Activated CD4-positive, alpha-beta T cell treated with anti-CD3 and anti-CD28 coated beads for 36 hours (primary cell): ENCODE measurements at regions of chr9 and their contacts with region 1.

Region 1: GRCh38 chr9:93453047-93453914 is at the start of gene FAM120AOS:
- DNase-seq: peak; percentile 92
- ATAC-seq: peak; percentile 68
- H3K4me3 Mint-ChIP-seq: peak within 1 kb of the TSS; percentile 89
- H3K27ac Mint-ChIP-seq: peak within 1 kb of the TSS; percentile 96
- H3K4me1 Mint-ChIP-seq: peaks cover 47% of the 10 kb centered on the region
- H3K27me3 Mint-ChIP-seq: no peaks in the 10 kb centered on the region
- total RNA-seq, gene FAM120AOS: 38.7 to 43.1 TPM

Region 2: DNA sequence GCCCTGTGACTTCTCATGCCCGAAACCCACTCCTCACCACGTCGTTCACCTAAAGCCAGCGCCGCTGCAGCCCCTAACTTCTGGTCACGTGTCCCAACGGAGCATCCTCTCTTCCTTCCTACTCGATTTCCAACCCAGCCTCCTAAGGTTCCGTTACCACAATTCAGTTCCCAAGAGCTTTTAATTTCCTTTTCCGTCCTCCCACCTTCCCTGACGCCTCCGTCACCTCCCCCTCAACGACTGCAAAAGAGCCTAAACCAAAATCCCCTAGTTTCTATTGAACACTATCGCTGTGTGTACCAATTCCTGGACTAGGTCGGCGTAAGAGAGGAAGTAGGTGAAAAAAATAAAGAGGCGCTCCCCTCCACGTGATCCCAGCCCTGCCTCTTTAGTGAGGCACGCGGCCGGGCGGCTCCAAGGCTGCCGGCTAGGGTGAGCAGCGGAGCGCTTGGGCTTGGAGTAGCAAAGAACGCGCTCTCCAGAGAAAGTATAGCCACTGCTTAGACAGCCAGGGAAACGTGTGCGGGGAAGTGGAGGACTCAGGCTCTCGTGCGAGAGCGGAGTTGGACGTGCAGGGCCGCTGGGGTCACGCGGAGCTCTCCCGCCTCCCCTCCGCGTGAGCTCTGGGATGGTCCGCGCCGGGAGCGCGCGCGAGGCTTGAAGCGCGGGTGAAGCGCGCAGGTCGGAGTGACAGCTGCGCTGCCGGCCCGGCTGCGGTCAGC is 1127.9 kb before region 1 on chr9 and contains the starts of genes CENPP and NOL8:
- CTCF ChIA-PET with region 1: no interaction called
- POLR2A ChIA-PET with region 1: no interaction called
- intact Hi-C with region 1: loop called in 1 of 2 experiments (anchors 5 kb)
- DNase-seq: peak; percentile 90
- ATAC-seq: peak; percentile 95
- H3K4me3 Mint-ChIP-seq: peak within 1 kb of the TSS; percentile 89
- H3K27ac Mint-ChIP-seq: peak within 1 kb of the TSS; percentile 97
- H3K4me1 Mint-ChIP-seq: peaks cover 37% of the 10 kb centered on the region
- H3K27me3 Mint-ChIP-seq: no peaks in the 10 kb centered on the region
- total RNA-seq, gene CENPP: 22.8 to 32.3 TPM
- total RNA-seq, gene NOL8: 57.7 to 80.2 TPM

Region 3: DNA sequence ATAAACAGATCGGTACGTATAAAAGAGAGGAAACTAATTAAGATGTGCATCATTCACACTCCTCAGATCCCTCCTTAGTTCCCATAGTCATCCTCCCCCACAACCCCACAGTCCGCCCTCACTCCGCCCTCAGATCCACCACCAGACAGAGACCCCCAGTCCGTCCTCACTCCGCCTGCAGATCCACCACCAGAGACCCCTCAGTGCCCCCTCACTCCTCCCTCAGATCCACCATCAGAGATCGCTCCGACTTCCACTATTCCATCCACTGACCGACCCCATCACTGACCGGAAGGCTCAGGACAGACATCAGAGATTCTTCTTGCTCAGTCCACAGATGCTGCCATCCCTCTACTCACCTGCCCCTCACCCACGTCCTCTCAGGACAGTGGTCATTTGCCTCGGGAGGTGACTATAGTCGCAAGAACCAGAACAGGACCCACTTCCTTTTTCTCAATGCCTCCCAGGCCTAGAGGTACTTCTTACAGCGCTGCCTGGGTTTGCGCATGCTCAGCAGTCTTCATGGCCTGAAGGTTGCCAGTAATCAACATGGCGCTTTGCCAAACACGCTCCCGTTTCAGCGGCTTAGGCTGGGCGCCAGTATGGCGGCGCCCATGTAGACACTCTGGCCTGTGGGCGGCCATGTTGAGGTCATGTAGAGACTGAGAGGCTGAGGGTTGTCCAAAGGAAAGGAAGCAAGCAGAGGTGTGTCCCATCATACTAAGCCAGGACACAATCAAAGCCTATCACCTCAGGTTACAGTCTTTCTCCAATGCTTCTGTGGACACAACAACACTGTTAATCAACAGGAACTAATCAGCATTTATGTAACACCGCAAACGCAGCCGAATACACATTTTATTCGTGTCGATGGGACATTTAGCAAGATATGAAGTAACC is 575.5 kb before region 1 on chr9 and contains the start of gene ZNF484:
- CTCF ChIA-PET with region 1: no interaction called
- POLR2A ChIA-PET with region 1: no interaction called
- intact Hi-C with region 1: loop called in 1 of 2 experiments (anchors 2 kb)
- DNase-seq: peak; percentile 98
- ATAC-seq: peak; percentile 97
- H3K4me3 Mint-ChIP-seq: peak within 1 kb of the TSS; percentile 99
- H3K27ac Mint-ChIP-seq: peak within 1 kb of the TSS; percentile 97
- H3K4me1 Mint-ChIP-seq: peaks cover 46% of the 10 kb centered on the region
- H3K27me3 Mint-ChIP-seq: no peaks in the 10 kb centered on the region
- total RNA-seq, gene ZNF484: 7.2 to 9.8 TPM

Region 4: GRCh38 chr9:93064392-93065134 is 388.7 kb before region 1 on chr9:
- CTCF ChIA-PET with region 1: interaction called, 3 read pairs
- POLR2A ChIA-PET with region 1: no interaction called
- intact Hi-C with region 1: loop called in 1 of 2 experiments (anchors 2 kb)
- DNase-seq: peak; percentile 96
- ATAC-seq: peak; percentile 90
- H3K4me3 Mint-ChIP-seq: peak overlapping the region; percentile 76
- H3K27ac Mint-ChIP-seq: peak overlapping the region; percentile 98
- H3K4me1 Mint-ChIP-seq: peaks cover 94% of the 10 kb centered on the region
- H3K27me3 Mint-ChIP-seq: no peaks in the 10 kb centered on the region

Region 5: GRCh38 chr9:93159601-93160471 is 293.4 kb before region 1 on chr9:
- CTCF ChIA-PET with region 1: interaction called, 3 read pairs
- POLR2A ChIA-PET with region 1: no interaction called
- intact Hi-C with region 1: loop called (anchors 5 kb)
- DNase-seq: peak; percentile 86
- ATAC-seq: peak; percentile 68
- H3K4me3 Mint-ChIP-seq: no peak overlapping the region
- H3K27ac Mint-ChIP-seq: no peak overlapping the region
- H3K4me1 Mint-ChIP-seq: peaks cover 26% of the 10 kb centered on the region
- H3K27me3 Mint-ChIP-seq: no peaks in the 10 kb centered on the region

Region 6: GRCh38 chr9:93252781-93253530 is 200.3 kb before region 1 on chr9:
- CTCF ChIA-PET with region 1: no interaction called
- POLR2A ChIA-PET with region 1: no interaction called
- intact Hi-C with region 1: no loop called
- DNase-seq: no peak
- ATAC-seq: no peak
- H3K4me3 Mint-ChIP-seq: no peak overlapping the region
- H3K27ac Mint-ChIP-seq: no peak overlapping the region
- H3K4me1 Mint-ChIP-seq: no peaks in the 10 kb centered on the region
- H3K27me3 Mint-ChIP-seq: no peaks in the 10 kb centered on the region

Region 7: DNA sequence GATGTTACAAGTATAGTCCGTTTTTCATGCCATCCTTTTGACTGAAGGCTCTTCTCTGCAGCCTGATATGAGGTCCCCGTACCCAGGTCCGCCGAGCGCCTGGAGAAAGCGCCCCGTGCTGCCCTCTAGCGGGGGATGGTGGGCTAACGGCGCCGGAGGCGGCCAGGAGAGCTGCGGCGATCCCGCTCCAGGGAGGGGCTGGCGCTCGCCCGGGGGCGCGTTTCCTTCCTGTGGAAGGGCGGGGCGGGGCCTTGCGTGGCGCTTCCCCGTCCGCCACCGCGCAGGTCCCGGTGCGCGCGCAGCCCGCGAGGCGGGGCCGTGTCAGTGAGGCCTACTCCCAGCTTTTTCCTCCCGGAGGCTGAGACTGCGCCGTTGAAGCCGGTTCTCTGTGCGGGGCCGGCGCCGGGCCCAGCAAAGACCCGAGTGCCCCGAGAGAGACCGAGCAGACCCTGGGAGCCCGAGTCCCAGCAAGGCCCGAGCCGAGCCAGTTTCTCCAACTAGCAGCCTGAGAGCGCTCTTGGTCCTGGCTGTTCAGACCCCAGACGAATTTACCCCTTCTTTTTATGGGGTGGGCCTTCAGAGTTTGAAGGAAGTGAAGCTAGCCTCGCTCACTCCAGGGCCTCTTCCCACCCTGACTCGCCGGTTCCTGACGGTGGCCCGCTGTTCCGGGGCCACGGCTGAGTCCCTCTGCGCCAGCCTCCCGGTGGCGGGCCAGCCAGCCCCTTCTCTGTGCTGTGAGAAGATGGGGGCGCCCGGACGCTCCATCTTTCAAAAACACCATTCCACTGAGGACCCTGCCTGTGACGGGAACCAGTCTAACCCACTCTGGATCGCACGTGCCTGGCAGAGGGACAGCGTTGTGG is 113.4 kb after region 1 on chr9:
- CTCF ChIA-PET with region 1: interaction called, 11 read pairs
- POLR2A ChIA-PET with region 1: interaction called, 6 read pairs
- intact Hi-C with region 1: loop called (anchors 1 to 5 kb)
- DNase-seq: peak; percentile 99
- ATAC-seq: peak; percentile 98
- H3K4me3 Mint-ChIP-seq: peak overlapping the region; percentile 83
- H3K27ac Mint-ChIP-seq: peak overlapping the region; percentile 89
- H3K4me1 Mint-ChIP-seq: peaks cover 24% of the 10 kb centered on the region
- H3K27me3 Mint-ChIP-seq: no peaks in the 10 kb centered on the region